Activated naive CD4-positive, alpha-beta T cell treated with anti-CD3 and anti-CD28 coated beads for 36 hours (primary cell): ENCODE measurements at regions of chr3 and their contacts with region 1.

Region 1: DNA sequence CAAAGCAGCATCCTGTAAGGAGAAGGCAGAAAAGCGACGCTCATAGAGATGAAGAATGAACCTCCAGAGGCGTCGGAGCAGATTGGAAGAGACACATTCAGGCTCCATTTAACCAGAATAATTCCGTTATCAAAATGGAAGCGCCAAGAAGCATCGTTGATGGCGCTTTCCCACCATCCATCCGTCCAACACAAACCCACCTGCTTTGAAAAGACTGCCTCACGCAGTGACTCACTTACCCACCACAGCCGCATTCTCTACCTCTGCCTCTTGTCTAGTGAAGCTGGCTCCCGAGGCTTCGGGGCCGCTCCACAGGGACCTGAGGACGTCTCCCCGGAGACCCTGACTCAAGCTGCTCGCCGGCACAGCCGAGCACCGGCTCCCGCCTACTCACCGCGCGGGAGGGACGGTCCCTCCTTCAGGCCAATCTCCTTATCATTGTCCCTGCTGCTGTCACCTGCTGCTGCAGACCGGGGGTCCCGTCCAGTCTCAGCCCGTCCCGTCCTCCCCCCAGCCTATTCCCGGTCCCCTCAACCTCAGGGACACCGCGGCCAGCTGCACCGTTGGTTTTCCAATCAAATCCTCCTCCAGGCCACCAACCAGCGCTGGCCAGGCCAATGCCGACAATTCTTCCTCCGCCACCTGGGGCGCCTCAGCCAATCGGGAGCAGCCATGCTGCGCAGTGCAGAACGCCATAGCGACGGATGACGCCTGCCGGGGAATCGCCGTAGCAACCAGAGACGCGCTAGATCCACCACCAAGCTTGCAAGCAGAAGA is at the start of gene NEK10:
- DNase-seq: peak; percentile 91
- H3K4me3 Mint-ChIP-seq: peak within 1 kb of the TSS; percentile 94
- H3K27ac Mint-ChIP-seq: peak within 1 kb of the TSS; percentile 63
- H3K4me1 Mint-ChIP-seq: peaks cover 13% of the 10 kb centered on the region
- H3K27me3 Mint-ChIP-seq: no peaks in the 10 kb centered on the region
- total RNA-seq, gene NEK10: 0.07 to 0.26 TPM

Region 2: GRCh38 chr3:25789596-25790556 is 1579.1 kb before region 1 on chr3 and contains the start of gene OXSM:
- CTCF ChIA-PET with region 1: no interaction called
- intact Hi-C with region 1: loop called (anchors 10 kb)
- DNase-seq: peak; percentile 93
- H3K4me3 Mint-ChIP-seq: peak within 1 kb of the TSS; percentile 97
- H3K27ac Mint-ChIP-seq: peak within 1 kb of the TSS; percentile 97
- H3K4me1 Mint-ChIP-seq: peaks cover 42% of the 10 kb centered on the region
- H3K27me3 Mint-ChIP-seq: no peaks in the 10 kb centered on the region
- total RNA-seq, gene OXSM: 10.0 to 11.4 TPM

Region 3: GRCh38 chr3:26579116-26579515 is 789.9 kb before region 1 on chr3:
- CTCF ChIA-PET with region 1: no interaction called
- intact Hi-C with region 1: no loop called
- DNase-seq: no peak
- H3K4me3 Mint-ChIP-seq: no peak overlapping the region
- H3K27ac Mint-ChIP-seq: no peak overlapping the region
- H3K4me1 Mint-ChIP-seq: no peaks in the 10 kb centered on the region
- H3K27me3 Mint-ChIP-seq: no peaks in the 10 kb centered on the region

Region 4: GRCh38 chr3:27380433-27381357 is 11.7 kb after region 1 on chr3:
- CTCF ChIA-PET with region 1: interaction called, 3 read pairs
- intact Hi-C with region 1: loop called (anchors 1 kb)
- DNase-seq: no peak
- H3K4me3 Mint-ChIP-seq: no peak overlapping the region
- H3K27ac Mint-ChIP-seq: no peak overlapping the region
- H3K4me1 Mint-ChIP-seq: peaks cover 3% of the 10 kb centered on the region
- H3K27me3 Mint-ChIP-seq: no peaks in the 10 kb centered on the region

Region 5: GRCh38 chr3:27392950-27393679 is 24.1 kb after region 1 on chr3:
- CTCF ChIA-PET with region 1: no interaction called
- intact Hi-C with region 1: no loop called
- DNase-seq: no peak
- H3K4me3 Mint-ChIP-seq: no peak overlapping the region
- H3K27ac Mint-ChIP-seq: no peak overlapping the region
- H3K4me1 Mint-ChIP-seq: no peaks in the 10 kb centered on the region
- H3K27me3 Mint-ChIP-seq: no peaks in the 10 kb centered on the region

Region 6: DNA sequence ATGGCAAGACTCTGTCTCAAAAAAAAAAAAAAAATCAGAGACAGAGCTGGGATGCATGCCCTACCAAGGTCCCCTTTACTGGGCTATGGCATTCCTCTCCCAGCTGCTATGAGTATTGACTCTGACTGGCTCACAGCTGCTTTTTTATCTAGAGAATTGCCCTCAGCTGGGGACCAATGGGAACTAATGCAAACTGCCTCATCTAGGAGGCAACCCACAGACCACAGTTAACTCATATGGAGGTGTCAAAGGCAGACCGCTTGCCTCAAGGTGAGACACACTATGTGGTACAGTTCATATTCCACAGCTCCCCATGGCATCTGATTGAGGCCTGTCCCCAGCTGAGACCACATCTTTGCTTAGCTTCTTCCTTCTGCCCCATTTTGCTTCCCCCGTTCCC is 536.6 kb after region 1 on chr3:
- CTCF ChIA-PET with region 1: no interaction called
- intact Hi-C with region 1: loop called (anchors 10 kb)
- DNase-seq: peak; percentile 8
- H3K4me3 Mint-ChIP-seq: no peak overlapping the region
- H3K27ac Mint-ChIP-seq: no peak overlapping the region
- H3K4me1 Mint-ChIP-seq: peaks cover 22% of the 10 kb centered on the region
- H3K27me3 Mint-ChIP-seq: no peaks in the 10 kb centered on the region

Region 7: GRCh38 chr3:28252001-28252431 is 883.0 kb after region 1 on chr3:
- CTCF ChIA-PET with region 1: no interaction called
- intact Hi-C with region 1: no loop called
- DNase-seq: no peak
- H3K4me3 Mint-ChIP-seq: no peak overlapping the region
- H3K27ac Mint-ChIP-seq: no peak overlapping the region
- H3K4me1 Mint-ChIP-seq: peaks cover 47% of the 10 kb centered on the region
- H3K27me3 Mint-ChIP-seq: no peaks in the 10 kb centered on the region

Region 8: GRCh38 chr3:28348629-28349483 is 979.8 kb after region 1 on chr3 and contains the starts of genes AZI2 and ZCWPW2:
- CTCF ChIA-PET with region 1: no interaction called
- intact Hi-C with region 1: loop called (anchors 2 kb)
- DNase-seq: peak; percentile 93
- H3K4me3 Mint-ChIP-seq: peak within 1 kb of the TSS; percentile 88
- H3K27ac Mint-ChIP-seq: peak within 1 kb of the TSS; percentile 92
- H3K4me1 Mint-ChIP-seq: peaks cover 36% of the 10 kb centered on the region
- H3K27me3 Mint-ChIP-seq: no peaks in the 10 kb centered on the region
- total RNA-seq, gene AZI2: 31.5 to 39.4 TPM
- total RNA-seq, gene ZCWPW2: 0.17 TPM in 1 of 2 experiments, not detected in the other